ENCODE measurements at regions of chr7 and their contacts with region 1.

Region 1: GRCh38 chr7:76037310-76037709 is 10.5 kb downstream of the STYXL1 start:
- DNase-seq: no peak
- ATAC-seq: no peak
- H3K4me3 Mint-ChIP-seq: no peak overlapping the region
- H3K27ac Mint-ChIP-seq: no peak overlapping the region
- H3K4me1 Mint-ChIP-seq: peaks cover 6% of the 10 kb centered on the region
- H3K27me3 Mint-ChIP-seq: no peaks in the 10 kb centered on the region

Region 2: DNA sequence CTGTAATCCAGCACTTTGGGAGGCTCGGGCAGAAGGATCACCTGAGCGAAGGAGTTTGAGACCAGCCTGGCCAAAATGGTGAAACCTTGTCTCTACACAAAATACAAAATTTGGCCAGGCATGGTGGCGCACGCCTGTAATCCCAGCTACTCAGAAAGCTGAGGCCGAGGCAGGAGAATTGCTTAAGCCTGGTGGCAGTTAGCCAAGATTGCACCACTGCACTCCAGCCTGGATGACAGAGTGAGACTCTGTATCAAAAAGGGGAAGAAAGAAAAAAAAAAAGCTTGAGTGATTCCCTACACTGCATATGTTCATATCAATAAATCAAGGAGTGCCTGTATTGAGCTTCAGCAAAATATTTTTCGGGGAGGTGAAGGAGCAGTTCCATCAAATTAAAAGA is 118.6 kb after region 1 on chr7:
- CTCF ChIA-PET with region 1: no interaction called
- POLR2A ChIA-PET with region 1: interaction called, 12 read pairs
- intact Hi-C with region 1: no loop called
- DNase-seq: no peak
- ATAC-seq: no peak
- H3K4me3 Mint-ChIP-seq: no peak overlapping the region
- H3K27ac Mint-ChIP-seq: no peak overlapping the region
- H3K4me1 Mint-ChIP-seq: peaks cover 29% of the 10 kb centered on the region
- H3K27me3 Mint-ChIP-seq: no peaks in the 10 kb centered on the region